Activated CD8-positive, alpha-beta T cell treated with anti-CD3 and anti-CD28 coated beads, Interleukin-2, amount 10 ng/mL, durations not matched to agents 7 days and 5 days (primary cell): ENCODE measurements at regions of chr11 and their contacts with region 1.

Region 1: GRCh38 chr11:57800444-57801182 is 39.0 kb downstream of the CTNND1 start:
- DNase-seq: peak; percentile 40
- ATAC-seq: peak; percentile 90
- H3K4me3 Mint-ChIP-seq: peak overlapping the region; percentile 20
- H3K27ac Mint-ChIP-seq: peak overlapping the region; percentile 70
- H3K4me1 Mint-ChIP-seq: peaks cover 41% of the 10 kb centered on the region
- H3K27me3 Mint-ChIP-seq: no peaks in the 10 kb centered on the region

Region 2: GRCh38 chr11:57644748-57645688 is 155.6 kb before region 1 on chr11:
- CTCF ChIA-PET with region 1: interaction called, 25 read pairs
- POLR2A ChIA-PET with region 1: interaction called, 3 read pairs
- DNase-seq: peak; percentile 91
- ATAC-seq: peak; percentile 86
- H3K4me3 Mint-ChIP-seq: no peak overlapping the region
- H3K27ac Mint-ChIP-seq: no peak overlapping the region
- H3K4me1 Mint-ChIP-seq: peaks cover 51% of the 10 kb centered on the region
- H3K27me3 Mint-ChIP-seq: peaks cover 53% of the 10 kb centered on the region

Region 3: DNA sequence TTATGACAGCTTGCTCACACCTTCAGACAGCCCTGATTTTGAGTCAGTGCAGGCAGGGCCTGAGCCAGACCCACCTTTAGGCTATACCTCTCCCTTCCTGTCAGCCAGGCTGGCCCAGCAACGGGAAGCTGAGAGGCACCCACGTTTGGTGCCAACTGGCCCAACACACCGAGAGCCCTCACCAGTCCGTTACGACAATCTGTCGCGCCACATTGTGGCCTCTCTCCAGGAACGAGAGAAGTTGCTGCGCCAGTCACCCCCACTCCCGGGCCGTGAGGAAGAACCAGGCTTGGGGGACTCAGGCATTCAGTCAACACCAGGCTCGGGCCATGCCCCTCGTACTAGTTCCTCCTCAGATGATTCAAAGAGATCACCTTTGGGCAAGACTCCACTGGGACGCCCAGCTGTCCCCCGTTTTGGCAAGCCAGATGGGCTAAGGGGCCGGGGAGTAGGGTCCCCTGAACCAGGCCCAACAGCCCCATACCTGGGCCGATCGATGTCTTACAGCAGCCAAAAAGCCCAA is 101.7 kb before region 1 on chr11:
- CTCF ChIA-PET with region 1: interaction called, 35 read pairs
- POLR2A ChIA-PET with region 1: no interaction called
- DNase-seq: no peak
- ATAC-seq: peak; percentile 25
- H3K4me3 Mint-ChIP-seq: no peak overlapping the region
- H3K27ac Mint-ChIP-seq: no peak overlapping the region
- H3K4me1 Mint-ChIP-seq: no peaks in the 10 kb centered on the region
- H3K27me3 Mint-ChIP-seq: no peaks in the 10 kb centered on the region

Region 4: DNA sequence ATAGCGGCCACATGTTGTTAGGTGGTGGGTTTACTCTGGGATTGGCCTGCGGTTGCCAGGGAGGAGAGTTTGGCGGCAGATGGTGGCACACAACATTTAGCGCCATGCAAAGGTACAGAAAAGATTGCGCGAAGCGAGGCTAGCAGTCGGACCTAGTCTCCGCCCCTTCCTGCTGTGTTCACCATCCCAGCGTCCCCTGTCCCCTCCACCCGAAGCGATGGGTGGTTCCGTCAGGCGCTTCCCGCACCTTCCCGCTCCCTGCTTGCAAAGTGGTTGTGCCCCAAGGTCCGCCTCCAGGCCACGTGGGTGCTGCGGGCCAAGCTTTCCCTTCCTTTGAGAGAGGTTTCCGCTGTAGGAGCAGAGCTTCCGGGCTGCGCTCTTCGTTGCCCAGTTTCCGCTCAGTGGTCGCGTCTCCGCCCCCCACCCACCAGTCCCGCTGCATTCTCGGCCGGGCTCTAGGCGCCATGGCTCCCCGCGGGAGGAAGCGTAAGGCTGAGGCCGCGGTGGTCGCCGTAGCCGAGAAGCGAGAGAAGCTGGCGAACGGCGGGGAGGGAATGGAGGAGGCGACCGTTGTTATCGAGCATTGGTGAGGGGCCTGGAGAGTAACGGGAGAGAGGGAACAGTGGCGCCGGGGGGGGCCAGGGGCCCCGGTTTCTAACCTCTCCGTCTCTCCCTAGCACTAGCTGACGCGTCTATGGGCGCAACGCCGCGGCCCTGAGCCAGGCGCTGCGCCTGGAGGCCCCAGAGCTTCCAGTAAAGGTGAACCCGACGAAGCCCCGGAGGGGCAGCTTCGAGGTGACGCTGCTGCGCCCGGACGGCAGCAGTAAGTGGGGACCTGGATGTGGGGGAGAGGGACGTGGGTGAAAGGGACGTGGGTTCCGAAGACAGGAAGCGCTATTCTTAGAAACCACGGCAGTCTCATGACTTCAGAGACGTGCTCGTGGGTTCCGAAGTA is 59.2 kb before region 1 on chr11 and contains the start of gene SELENOH:
- CTCF ChIA-PET with region 1: interaction called, 113 read pairs
- POLR2A ChIA-PET with region 1: interaction called, 28 read pairs
- DNase-seq: peak; percentile 98
- ATAC-seq: peak; percentile 91
- H3K4me3 Mint-ChIP-seq: peak within 1 kb of the TSS; percentile 100
- H3K27ac Mint-ChIP-seq: peak within 1 kb of the TSS; percentile 99
- H3K4me1 Mint-ChIP-seq: peaks cover 47% of the 10 kb centered on the region
- H3K27me3 Mint-ChIP-seq: no peaks in the 10 kb centered on the region
- total RNA-seq, gene SELENOH: 204 to 210 TPM

Region 5: GRCh38 chr11:57772562-57772961 is 28.1 kb before region 1 on chr11:
- CTCF ChIA-PET with region 1: interaction called, 10 read pairs
- POLR2A ChIA-PET with region 1: no interaction called
- DNase-seq: no peak
- ATAC-seq: no peak
- H3K4me3 Mint-ChIP-seq: no peak overlapping the region
- H3K27ac Mint-ChIP-seq: no peak overlapping the region
- H3K4me1 Mint-ChIP-seq: peaks cover 40% of the 10 kb centered on the region
- H3K27me3 Mint-ChIP-seq: no peaks in the 10 kb centered on the region

Region 6: DNA sequence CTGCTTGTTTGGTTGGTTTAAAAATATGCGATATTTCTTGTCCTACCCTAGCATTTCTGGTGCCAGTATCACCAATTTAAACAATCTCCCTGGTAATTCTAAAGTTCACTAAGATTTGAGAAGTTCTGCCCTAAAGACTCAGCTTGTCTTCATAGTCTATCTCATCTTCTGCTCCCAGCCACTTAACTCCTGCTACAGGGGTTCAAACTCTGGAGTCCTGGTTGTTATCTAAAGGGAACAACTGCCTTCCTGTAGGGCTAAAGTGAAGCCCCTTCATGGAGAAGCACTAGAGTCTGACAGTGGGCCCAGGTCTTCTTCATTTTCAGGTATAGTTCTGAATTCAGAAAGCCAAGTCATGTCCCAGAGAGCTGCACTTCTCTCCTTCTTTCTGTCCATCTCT is 34.2 kb after region 1 on chr11:
- CTCF ChIA-PET with region 1: no interaction called
- POLR2A ChIA-PET with region 1: no interaction called
- DNase-seq: no peak
- ATAC-seq: no peak
- H3K4me3 Mint-ChIP-seq: no peak overlapping the region
- H3K27ac Mint-ChIP-seq: no peak overlapping the region
- H3K4me1 Mint-ChIP-seq: no peaks in the 10 kb centered on the region
- H3K27me3 Mint-ChIP-seq: peaks cover 16% of the 10 kb centered on the region

Region 7: DNA sequence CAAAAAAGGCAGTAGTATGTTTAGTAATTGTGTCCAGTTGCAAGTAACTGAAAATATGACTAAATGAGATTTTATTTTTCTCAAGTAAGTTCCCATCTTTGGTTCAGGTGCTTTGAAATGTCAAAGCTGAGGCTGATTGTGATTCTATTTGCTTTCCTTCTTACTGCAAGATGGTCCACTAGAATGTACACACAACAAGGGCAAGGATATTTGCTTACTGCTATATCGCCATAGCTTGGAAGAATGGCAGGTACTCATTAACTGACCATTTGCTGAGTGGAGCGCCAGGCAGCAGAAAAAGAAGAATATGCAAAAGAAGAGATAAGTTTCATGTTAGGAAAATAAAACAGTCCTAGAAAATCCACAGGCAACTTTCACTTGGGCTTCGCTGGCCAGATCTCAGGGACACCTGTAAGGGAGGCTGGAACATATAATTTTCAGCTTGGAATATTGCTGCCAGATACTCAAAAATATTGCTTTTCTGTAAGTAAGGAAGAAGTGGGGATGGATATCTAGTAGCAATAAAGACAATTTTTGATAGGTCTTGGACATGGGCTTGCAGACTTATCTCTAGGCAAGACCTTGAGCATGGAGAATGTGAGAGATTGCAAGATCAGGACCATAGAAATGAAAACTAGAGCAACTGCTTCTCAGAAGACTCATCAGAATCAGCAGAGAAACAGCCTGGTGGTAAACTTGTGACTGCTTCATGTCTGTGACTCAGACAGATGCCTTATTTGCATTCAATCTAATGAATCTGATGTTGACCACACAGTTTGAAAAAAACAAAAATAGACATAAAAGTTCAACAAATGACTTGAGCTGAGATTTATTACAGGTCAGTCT is 178.3 kb after region 1 on chr11:
- CTCF ChIA-PET with region 1: no interaction called
- POLR2A ChIA-PET with region 1: no interaction called
- DNase-seq: no peak
- ATAC-seq: no peak
- H3K4me3 Mint-ChIP-seq: no peak overlapping the region
- H3K27ac Mint-ChIP-seq: no peak overlapping the region
- H3K4me1 Mint-ChIP-seq: no peaks in the 10 kb centered on the region
- H3K27me3 Mint-ChIP-seq: peaks cover 2% of the 10 kb centered on the region